BJ (cell line): ENCODE measurements at regions of chr1 and their contacts with region 1.

Region 1: GRCh38 chr1:58515794-58516401 is 30.6 kb downstream of the OMA1 start:
- DNase-seq: peak; percentile 10
- H3K4me3 ChIP-seq: no peak overlapping the region
- H3K27me3 ChIP-seq: no peaks in the 10 kb centered on the region
- CTCF ChIP-seq: peak; percentile 62

Region 2: GRCh38 chr1:58539553-58539952 is 23.7 kb after region 1 on chr1:
- CTCF ChIA-PET with region 1: interaction called, 11 read pairs
- POLR2A ChIA-PET with region 1: no interaction called
- DNase-seq: peak; percentile 17
- H3K4me3 ChIP-seq: no peak overlapping the region
- H3K27me3 ChIP-seq: no peaks in the 10 kb centered on the region
- CTCF ChIP-seq: no peak

Region 3: GRCh38 chr1:58546520-58547308 is 30.8 kb after region 1 on chr1 and contains the start of gene OMA1:
- CTCF ChIA-PET with region 1: interaction called, 48 read pairs
- POLR2A ChIA-PET with region 1: no interaction called
- DNase-seq: peak; percentile 76
- H3K4me3 ChIP-seq: peak within 1 kb of the TSS; percentile 78
- H3K27me3 ChIP-seq: peaks cover 3% of the 10 kb centered on the region; the same call in 1 of the 2 replicates
- CTCF ChIP-seq: peak; percentile 99
- polyA plus RNA-seq, gene OMA1: 8.4 and 15.4 TPM in 2 replicates

Region 4: GRCh38 chr1:58652651-58653184 is 136.8 kb after region 1 on chr1:
- CTCF ChIA-PET with region 1: interaction called, 67 read pairs
- POLR2A ChIA-PET with region 1: no interaction called
- DNase-seq: peak; percentile 29
- H3K4me3 ChIP-seq: no peak overlapping the region
- H3K27me3 ChIP-seq: no peaks in the 10 kb centered on the region
- CTCF ChIP-seq: peak; percentile 73

Region 5: DNA sequence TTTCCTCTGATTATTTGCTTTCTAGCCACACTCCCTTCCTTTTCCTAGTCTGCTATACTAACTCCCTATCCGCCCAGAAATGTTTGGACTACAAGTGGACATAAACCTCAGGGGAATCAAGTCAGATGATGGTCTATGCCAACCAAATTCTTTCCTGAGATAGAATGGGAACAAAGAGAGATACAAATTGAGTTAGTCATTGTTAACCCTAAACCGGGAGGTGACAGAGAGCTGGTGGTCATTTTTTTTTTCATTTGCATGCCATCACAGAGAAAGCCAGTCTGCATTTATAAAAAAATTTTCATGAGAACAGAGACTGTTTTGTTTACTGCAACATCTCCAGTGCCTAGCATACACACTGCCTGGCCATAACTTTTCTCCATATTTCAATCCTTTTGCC is 149.0 kb after region 1 on chr1:
- CTCF ChIA-PET with region 1: interaction called, 14 read pairs
- POLR2A ChIA-PET with region 1: no interaction called
- DNase-seq: no peak
- H3K4me3 ChIP-seq: no peak overlapping the region
- H3K27me3 ChIP-seq: no peaks in the 10 kb centered on the region
- CTCF ChIP-seq: no peak